Adrenal gland (tissue), 19 donors: ENCODE measurements at regions of chr3 and their contacts with region 1.

Region 1: DNA sequence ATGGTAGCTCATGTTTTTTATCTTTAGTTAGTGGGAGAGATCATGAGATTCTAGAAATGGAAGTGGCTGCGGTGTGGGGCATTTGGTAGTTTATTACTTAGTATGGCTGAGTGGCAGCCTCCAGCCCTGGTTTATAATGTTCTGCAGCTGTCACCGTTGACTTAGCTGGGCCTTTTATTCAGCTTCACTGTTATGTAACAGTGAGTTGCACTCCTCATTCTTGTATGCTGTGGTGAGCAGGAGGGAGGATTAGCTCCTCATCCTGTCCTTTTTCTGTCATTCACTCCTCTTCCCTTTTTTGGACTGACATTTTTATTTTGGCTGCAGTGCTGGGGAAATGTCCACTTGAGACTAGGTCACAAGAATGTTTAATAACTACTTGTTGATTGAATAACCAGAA is 29.5 kb downstream of the RAD54L2 start:
- DNase-seq: peak in 1 of 7 donors; percentile 56
- H3K4me3 ChIP-seq: no peak overlapping the region
- H3K27ac ChIP-seq: peak overlapping the region in 2 of 5 donors; percentile 18 to 35
- H3K4me1 ChIP-seq: peaks cover 13 to 27% of the 10 kb centered on the region in 2 donors
- H3K27me3 ChIP-seq: no peaks in the 10 kb centered on the region
- CTCF ChIP-seq: no peak
- POLR2A ChIP-seq: peak in 1 of 2 donors; percentile 14

Region 2: GRCh38 chr3:51617597-51617996 is 49.6 kb after region 1 on chr3:
- intact Hi-C with region 1: loop called in 1 of 2 experiments (anchors 10 kb)
- DNase-seq: no peak
- H3K4me3 ChIP-seq: no peak overlapping the region
- H3K27ac ChIP-seq: peak overlapping the region in 2 of 5 donors; percentile 42 to 44
- H3K4me1 ChIP-seq: peaks cover 26 to 43% of the 10 kb centered on the region in 2 donors
- H3K27me3 ChIP-seq: no peaks in the 10 kb centered on the region
- CTCF ChIP-seq: no peak
- POLR2A ChIP-seq: no peak